ENCODE measurements at regions of chr6 and their contacts with region 1.

Region 1: GRCh38 chr6:152648105-152648504 is 10.9 kb upstream of the SYNE1 start:
- DNase-seq: no peak
- ATAC-seq: no peak
- H3K4me3 Mint-ChIP-seq: no peak overlapping the region
- H3K27ac Mint-ChIP-seq: no peak overlapping the region
- H3K4me1 Mint-ChIP-seq: no peaks in the 10 kb centered on the region
- H3K27me3 Mint-ChIP-seq: peaks cover 23% of the 10 kb centered on the region

Region 2: GRCh38 chr6:152261179-152261578 is 386.9 kb before region 1 on chr6:
- CTCF ChIA-PET with region 1: no interaction called
- POLR2A ChIA-PET with region 1: no interaction called
- intact Hi-C with region 1: no loop called
- DNase-seq: no peak
- ATAC-seq: no peak
- H3K4me3 Mint-ChIP-seq: no peak overlapping the region
- H3K27ac Mint-ChIP-seq: no peak overlapping the region
- H3K4me1 Mint-ChIP-seq: no peaks in the 10 kb centered on the region
- H3K27me3 Mint-ChIP-seq: no peaks in the 10 kb centered on the region

Region 3: DNA sequence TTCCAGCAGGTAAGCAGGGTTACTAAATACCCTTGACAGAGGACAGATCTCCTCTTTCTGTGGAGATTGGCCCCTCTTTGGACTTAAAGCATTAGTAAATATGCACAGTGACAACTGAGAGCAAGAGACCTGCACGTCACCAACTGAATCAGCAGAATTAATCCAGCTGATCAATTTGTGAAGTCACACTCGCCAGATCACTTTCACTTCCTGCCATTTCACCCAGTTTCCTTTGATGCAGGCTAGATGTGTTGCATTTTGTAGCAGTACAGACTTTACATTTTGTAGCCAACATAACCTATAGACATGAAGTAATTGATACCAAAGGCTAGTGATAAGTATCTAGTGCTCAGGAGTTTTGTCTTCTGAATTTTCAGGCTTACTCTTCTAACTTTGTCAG is 22.9 kb before region 1 on chr6:
- CTCF ChIA-PET with region 1: no interaction called
- POLR2A ChIA-PET with region 1: interaction called, 11 read pairs
- intact Hi-C with region 1: no loop called
- DNase-seq: no peak
- ATAC-seq: no peak
- H3K4me3 Mint-ChIP-seq: no peak overlapping the region
- H3K27ac Mint-ChIP-seq: no peak overlapping the region
- H3K4me1 Mint-ChIP-seq: no peaks in the 10 kb centered on the region
- H3K27me3 Mint-ChIP-seq: peaks cover 18% of the 10 kb centered on the region

Region 4: GRCh38 chr6:152661776-152662175 is 13.7 kb after region 1 on chr6:
- CTCF ChIA-PET with region 1: no interaction called
- POLR2A ChIA-PET with region 1: no interaction called
- intact Hi-C with region 1: no loop called
- DNase-seq: no peak
- ATAC-seq: no peak
- H3K4me3 Mint-ChIP-seq: no peak overlapping the region
- H3K27ac Mint-ChIP-seq: no peak overlapping the region
- H3K4me1 Mint-ChIP-seq: no peaks in the 10 kb centered on the region
- H3K27me3 Mint-ChIP-seq: peaks cover 7% of the 10 kb centered on the region

Measured in activated CD4-positive, alpha-beta T cell treated with anti-CD3 and anti-CD28 coated beads for 36 hours (primary cell).